SK-N-SH (cell line): ENCODE measurements at regions of chr20 and their contacts with region 1.

Region 1: GRCh38 chr20:21291026-21291425 is 12.1 kb upstream of the XRN2 start:
- DNase-seq: no peak
- H3K4me3 ChIP-seq: no peak overlapping the region
- H3K27ac ChIP-seq: no peak overlapping the region
- H3K4me1 ChIP-seq: peaks cover 0 to 3% of the 10 kb centered on the region in 2 experiments; a peak in 1 of 4 replicates
- H3K27me3 ChIP-seq: no peaks in the 10 kb centered on the region; the same call in 1 of the 2 replicates
- CTCF ChIP-seq: no peak
- EP300 ChIP-seq: no peak
- RAD21 ChIP-seq: no peak

Region 2: DNA sequence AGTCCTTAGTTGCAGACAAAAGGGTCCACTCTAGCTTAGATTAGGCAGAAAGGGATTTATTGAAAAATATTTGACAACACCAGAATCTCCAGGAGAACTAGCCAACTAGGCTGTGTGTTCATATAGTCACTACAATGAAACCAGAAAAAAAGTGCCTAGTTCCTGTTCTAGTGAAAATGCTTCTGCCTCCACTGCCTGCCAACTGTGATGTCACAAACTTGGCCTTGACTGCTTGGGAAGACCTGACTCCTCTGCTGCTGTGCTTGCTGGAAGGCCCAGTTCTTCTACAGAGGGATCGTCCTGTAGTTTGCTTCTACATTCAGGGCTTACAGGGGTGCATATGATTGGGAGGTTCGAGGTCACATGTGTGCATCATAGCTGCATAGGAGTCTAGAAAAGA is 28.2 kb before region 1 on chr20:
- CTCF ChIA-PET with region 1: no interaction called
- POLR2A ChIA-PET with region 1: no interaction called
- DNase-seq: no peak
- H3K4me3 ChIP-seq: no peak overlapping the region
- H3K27ac ChIP-seq: no peak overlapping the region
- H3K4me1 ChIP-seq: no peaks in the 10 kb centered on the region
- H3K27me3 ChIP-seq: peaks cover 8% of the 10 kb centered on the region; the same call in 1 of the 2 replicates
- CTCF ChIP-seq: no peak
- EP300 ChIP-seq: no peak
- RAD21 ChIP-seq: no peak

Region 3: GRCh38 chr20:21303061-21303871 is 12.2 kb after region 1 on chr20 and contains the start of gene XRN2:
- CTCF ChIA-PET with region 1: no interaction called
- POLR2A ChIA-PET with region 1: interaction called, 15 read pairs
- DNase-seq: peak; percentile 93
- H3K4me3 ChIP-seq: peak within 1 kb of the TSS; percentile 79 to 92
- H3K27ac ChIP-seq: peak within 1 kb of the TSS; percentile 94
- H3K4me1 ChIP-seq: peaks cover 0 to 2% of the 10 kb centered on the region in 2 experiments; a peak in 2 of 4 replicates
- H3K27me3 ChIP-seq: no peaks in the 10 kb centered on the region
- CTCF ChIP-seq: 0 out of 2 replicates have a peak, but pooled peaks have one; percentile 11
- EP300 ChIP-seq: no peak
- RAD21 ChIP-seq: no peak
- polyA plus RNA-seq, gene XRN2: 44.5 and 56.5 TPM in 2 replicates

Region 4: GRCh38 chr20:21361266-21361665 is 70.2 kb after region 1 on chr20:
- CTCF ChIA-PET with region 1: no interaction called
- POLR2A ChIA-PET with region 1: no interaction called
- DNase-seq: no peak
- H3K4me3 ChIP-seq: no peak overlapping the region
- H3K27ac ChIP-seq: no peak overlapping the region
- H3K4me1 ChIP-seq: peaks cover 0 to 5% of the 10 kb centered on the region in 2 experiments; a peak in 1 of 4 replicates
- H3K27me3 ChIP-seq: no peaks in the 10 kb centered on the region
- CTCF ChIP-seq: no peak
- EP300 ChIP-seq: no peak
- RAD21 ChIP-seq: no peak

Region 5: DNA sequence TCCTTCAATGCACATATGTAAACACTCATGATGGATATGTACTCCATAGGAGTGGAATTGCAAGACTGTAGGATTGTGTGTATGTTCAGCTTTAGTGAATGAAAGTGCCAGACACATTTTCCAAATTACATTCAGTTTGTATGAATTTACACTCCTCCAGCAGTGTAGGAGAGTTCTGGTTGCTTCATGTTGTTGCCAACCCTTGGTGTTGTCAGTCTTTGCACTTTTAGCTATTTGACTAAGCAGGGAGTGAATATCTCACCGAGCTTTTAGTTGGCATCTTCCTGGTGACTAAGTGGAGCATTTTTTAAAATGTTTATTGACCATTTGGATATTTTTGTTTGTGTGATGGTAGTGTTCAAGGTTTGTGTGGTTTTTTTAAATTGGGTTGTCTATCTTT is 82.4 kb after region 1 on chr20:
- CTCF ChIA-PET with region 1: no interaction called
- POLR2A ChIA-PET with region 1: no interaction called
- DNase-seq: no peak
- H3K4me3 ChIP-seq: no peak overlapping the region
- H3K27ac ChIP-seq: no peak overlapping the region
- H3K4me1 ChIP-seq: no peaks in the 10 kb centered on the region; a peak in 1 of 4 replicates
- H3K27me3 ChIP-seq: no peaks in the 10 kb centered on the region
- CTCF ChIP-seq: no peak
- EP300 ChIP-seq: no peak
- RAD21 ChIP-seq: no peak

Region 6: DNA sequence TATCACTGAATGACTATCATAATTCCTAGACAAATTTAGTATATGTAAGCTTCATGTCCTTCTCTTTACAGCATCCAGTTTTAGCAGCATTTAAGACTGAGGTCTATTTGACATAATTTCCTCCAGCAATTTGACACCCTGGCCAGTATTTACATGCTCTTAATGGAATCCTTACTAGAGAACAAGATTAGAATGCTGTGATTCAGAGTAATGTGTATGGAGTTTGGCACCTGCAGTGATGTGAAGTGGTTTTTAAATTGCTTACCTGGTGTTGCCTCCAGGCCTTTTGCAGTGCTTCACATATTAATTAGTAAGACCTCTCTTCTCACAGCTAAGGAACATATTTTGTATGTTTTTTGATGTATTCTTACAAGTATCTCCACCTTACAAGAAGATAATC is 96.5 kb after region 1 on chr20:
- CTCF ChIA-PET with region 1: no interaction called
- POLR2A ChIA-PET with region 1: no interaction called
- DNase-seq: no peak
- H3K4me3 ChIP-seq: no peak overlapping the region
- H3K27ac ChIP-seq: no peak overlapping the region
- H3K4me1 ChIP-seq: no peaks in the 10 kb centered on the region
- H3K27me3 ChIP-seq: no peaks in the 10 kb centered on the region
- CTCF ChIP-seq: no peak
- EP300 ChIP-seq: no peak
- RAD21 ChIP-seq: no peak